Vagina (tissue), 2 donors: ENCODE measurements at regions of chr1 and their contacts with region 1.

Region 1: DNA sequence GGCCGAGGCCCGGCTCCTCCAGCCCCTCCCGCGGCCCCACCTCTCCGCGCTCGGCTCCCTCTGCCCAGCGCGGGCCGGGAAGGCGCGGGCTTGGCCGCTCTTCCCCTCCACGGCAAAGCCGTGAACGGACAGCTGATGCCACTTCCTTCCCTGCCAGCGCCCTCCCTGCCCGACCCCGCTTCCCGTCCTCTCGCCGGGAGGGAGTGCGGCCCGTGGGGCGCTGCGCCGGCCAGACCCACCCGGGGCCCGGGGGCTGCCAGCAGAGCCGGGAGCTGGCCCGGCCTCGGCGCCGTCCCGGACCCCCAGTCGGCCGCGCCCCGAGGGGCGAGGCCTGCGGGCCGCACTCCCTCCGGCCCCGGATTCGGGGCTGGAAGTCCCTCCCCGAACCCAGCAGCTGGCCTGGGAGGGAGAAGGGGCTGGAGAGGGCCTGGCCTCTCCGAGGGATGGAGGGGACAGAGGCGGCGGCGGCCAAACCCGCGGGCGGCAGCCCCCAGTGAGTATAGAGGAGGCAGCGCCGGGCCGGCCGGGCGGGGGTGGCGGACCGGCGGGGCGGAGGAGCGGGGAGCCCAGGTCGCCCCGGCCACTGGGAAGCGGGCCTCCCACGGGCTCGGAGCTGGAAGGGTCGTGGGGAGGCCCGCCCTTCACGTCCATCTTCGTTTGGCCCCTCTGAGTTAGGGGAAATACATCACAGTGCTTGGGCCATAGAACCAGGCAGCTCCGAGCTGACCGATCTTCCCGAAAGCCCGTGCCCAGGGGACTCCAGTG is at the start of gene KIAA1614:
- DNase-seq: no peak
- H3K4me3 ChIP-seq: peak within 1 kb of the TSS; percentile 57 to 76
- H3K27ac ChIP-seq: peak within 1 kb of the TSS; percentile 92
- H3K4me1 ChIP-seq: peaks cover 21% of the 10 kb centered on the region
- H3K27me3 ChIP-seq: no peaks in the 10 kb centered on the region
- CTCF ChIP-seq: no peak
- POLR2A ChIP-seq: peak in 1 of 2 donors; percentile 2
- total RNA-seq, gene KIAA1614: 13.0 TPM

Region 2: GRCh38 chr1:180821970-180822369 is 91.0 kb before region 1 on chr1:
- intact Hi-C with region 1: no loop called
- DNase-seq: no peak
- H3K4me3 ChIP-seq: no peak overlapping the region
- H3K27ac ChIP-seq: no peak overlapping the region
- H3K4me1 ChIP-seq: no peaks in the 10 kb centered on the region
- H3K27me3 ChIP-seq: no peaks in the 10 kb centered on the region
- CTCF ChIP-seq: no peak
- POLR2A ChIP-seq: no peak

Region 3: DNA sequence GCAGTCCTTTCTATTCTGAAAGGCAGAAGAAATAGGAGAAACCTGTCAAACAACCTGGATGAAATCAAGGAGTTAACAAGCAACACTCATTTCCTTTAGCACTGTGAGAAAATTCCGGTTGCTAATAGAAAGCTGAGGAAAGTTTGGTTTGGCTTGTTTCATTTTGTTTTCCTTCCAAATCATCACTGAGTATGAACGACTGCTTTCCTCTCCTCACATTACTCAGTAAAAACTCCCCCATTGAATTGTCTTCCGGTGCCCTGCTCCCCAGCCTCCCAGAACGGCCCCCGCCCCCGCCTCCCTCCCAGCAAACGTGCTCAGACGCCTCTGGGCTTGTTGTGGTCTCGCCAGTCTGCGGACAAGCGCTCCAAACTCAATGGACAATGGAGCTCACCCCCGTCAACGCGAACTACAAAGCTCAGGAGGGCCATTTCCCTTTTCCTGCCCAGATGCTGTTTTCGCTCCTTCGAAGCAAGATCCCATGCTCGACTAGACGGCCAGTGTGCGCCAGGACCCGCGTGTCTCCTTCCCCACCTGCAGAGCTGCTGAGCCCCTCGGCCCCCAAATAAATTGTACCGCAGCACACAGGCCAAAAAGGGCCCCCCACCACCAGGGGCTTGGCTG is 108.9 kb after region 1 on chr1:
- intact Hi-C with region 1: loop called (anchors 2 kb)
- DNase-seq: peak in 1 of 2 donors; percentile 91
- H3K4me3 ChIP-seq: peak overlapping the region; percentile 93 to 94
- H3K27ac ChIP-seq: peak overlapping the region; percentile 88
- H3K4me1 ChIP-seq: peaks cover 29% of the 10 kb centered on the region
- H3K27me3 ChIP-seq: no peaks in the 10 kb centered on the region
- CTCF ChIP-seq: no peak
- POLR2A ChIP-seq: no peak

Region 4: GRCh38 chr1:182877842-182878241 is 1964.9 kb after region 1 on chr1:
- intact Hi-C with region 1: no loop called
- DNase-seq: no peak
- H3K4me3 ChIP-seq: no peak overlapping the region
- H3K27ac ChIP-seq: no peak overlapping the region
- H3K4me1 ChIP-seq: no peaks in the 10 kb centered on the region
- H3K27me3 ChIP-seq: no peaks in the 10 kb centered on the region
- CTCF ChIP-seq: no peak
- POLR2A ChIP-seq: no peak